ENCODE measurements at regions of chr1 and their contacts with region 1.

Region 1: GRCh38 chr1:219189021-219189824 is 15.5 kb downstream of the LYPLAL1 start:
- DNase-seq: no peak
- H3K4me3 Mint-ChIP-seq: no peak overlapping the region
- H3K27ac Mint-ChIP-seq: no peak overlapping the region
- H3K4me1 Mint-ChIP-seq: peaks cover 32% of the 10 kb centered on the region
- H3K27me3 Mint-ChIP-seq: no peaks in the 10 kb centered on the region

Region 2: DNA sequence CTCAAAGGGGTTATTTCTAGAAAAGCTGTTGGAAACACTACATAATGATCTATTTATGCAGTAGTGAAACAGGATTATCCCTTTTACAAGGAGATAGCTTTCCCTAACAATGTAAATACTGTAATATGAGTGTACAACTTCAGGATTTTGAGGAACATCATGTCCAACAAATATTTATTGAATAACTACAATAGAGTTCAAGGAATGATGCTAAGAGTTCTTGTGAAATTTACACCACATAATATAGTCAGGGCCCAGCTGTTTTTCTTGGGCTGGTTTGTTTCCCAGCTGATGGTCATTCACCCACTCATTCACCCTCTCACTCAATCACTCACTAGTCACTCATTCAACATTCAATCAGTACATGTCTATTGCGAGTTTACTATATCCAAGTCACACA is 27.9 kb before region 1 on chr1:
- CTCF ChIA-PET with region 1: no interaction called
- POLR2A ChIA-PET with region 1: no interaction called
- intact Hi-C with region 1: no loop called
- DNase-seq: no peak
- H3K4me3 Mint-ChIP-seq: no peak overlapping the region
- H3K27ac Mint-ChIP-seq: no peak overlapping the region
- H3K4me1 Mint-ChIP-seq: no peaks in the 10 kb centered on the region
- H3K27me3 Mint-ChIP-seq: peaks cover 15% of the 10 kb centered on the region

Region 3: DNA sequence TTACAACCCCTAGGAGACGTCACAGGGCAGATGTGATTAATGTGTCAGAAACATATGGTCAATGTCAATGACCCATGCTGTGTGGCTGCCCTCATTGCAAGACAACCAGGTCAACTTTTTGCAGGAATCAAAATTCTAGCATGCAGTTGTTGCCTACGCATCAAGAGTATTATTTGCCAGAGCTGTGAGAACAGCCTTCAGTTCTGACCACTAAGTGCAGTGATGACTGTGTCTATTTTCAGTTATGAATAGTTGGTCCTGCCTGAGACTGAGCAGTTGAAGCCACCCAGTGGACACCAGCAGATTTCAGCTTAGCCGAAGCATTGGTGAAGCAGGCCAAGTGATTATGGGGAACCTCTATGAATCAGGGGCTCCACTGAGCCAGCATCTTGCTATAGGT is 31.7 kb after region 1 on chr1:
- CTCF ChIA-PET with region 1: no interaction called
- POLR2A ChIA-PET with region 1: no interaction called
- intact Hi-C with region 1: no loop called
- DNase-seq: no peak
- H3K4me3 Mint-ChIP-seq: no peak overlapping the region
- H3K27ac Mint-ChIP-seq: no peak overlapping the region
- H3K4me1 Mint-ChIP-seq: no peaks in the 10 kb centered on the region
- H3K27me3 Mint-ChIP-seq: no peaks in the 10 kb centered on the region

Region 4: GRCh38 chr1:219324629-219325367 is 135.6 kb after region 1 on chr1:
- CTCF ChIA-PET with region 1: no interaction called
- POLR2A ChIA-PET with region 1: no interaction called
- intact Hi-C with region 1: loop called (anchors 1 kb)
- DNase-seq: peak; percentile 9
- H3K4me3 Mint-ChIP-seq: no peak overlapping the region
- H3K27ac Mint-ChIP-seq: no peak overlapping the region
- H3K4me1 Mint-ChIP-seq: peaks cover 11% of the 10 kb centered on the region
- H3K27me3 Mint-ChIP-seq: peaks cover 6% of the 10 kb centered on the region

Measured in activated CD4-positive, alpha-beta memory T cell treated with anti-CD3 and anti-CD28 coated beads for 36 hours (primary cell).